ENCODE measurements at regions of chr5 and their contacts with region 1.

Region 1: DNA sequence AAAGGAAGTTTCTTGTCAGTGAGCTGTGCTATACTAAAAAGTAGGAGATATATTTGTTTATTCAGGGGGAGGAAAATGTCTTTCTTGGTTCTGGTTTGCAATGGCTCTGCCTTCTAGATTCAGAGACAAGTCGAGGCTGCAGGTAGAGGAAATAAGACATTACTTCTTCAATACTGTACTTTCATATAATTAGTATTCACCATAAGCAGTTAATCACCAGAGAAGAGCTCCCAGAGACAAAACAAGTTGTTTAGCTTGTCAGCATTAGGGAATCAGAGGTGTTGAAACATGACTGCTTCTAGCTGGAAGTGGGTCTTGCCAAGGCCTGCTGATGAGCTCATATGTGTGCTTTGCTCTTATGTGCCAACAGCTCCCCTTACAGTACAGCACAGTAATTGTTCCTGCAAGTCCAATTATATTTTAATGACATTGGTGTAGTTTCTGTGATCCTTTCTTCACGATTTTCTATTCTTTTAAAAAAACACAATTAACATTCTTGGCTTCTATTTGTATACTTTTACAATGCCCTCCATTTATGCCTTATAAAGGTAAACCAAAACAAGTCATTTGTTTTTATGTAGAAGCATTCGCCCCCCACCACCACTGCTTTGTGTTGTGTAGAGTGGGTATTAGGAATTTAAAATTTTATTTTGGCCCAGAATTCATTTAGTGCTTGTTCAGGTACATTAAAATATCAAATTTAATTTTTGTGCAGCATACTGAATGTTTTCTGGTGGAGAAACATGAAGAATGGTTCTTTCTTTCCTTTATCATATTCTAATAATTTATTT is 112.2 kb downstream of the RPS23 start:
- DNase-seq: peak; percentile 71 to 93
- ATAC-seq: peak; percentile 89 to 91
- H3K4me3 ChIP-seq: no peak overlapping the region
- H3K27ac ChIP-seq: peak overlapping the region; percentile 88
- H3K4me1 ChIP-seq: peaks cover 36% of the 10 kb centered on the region
- CTCF ChIP-seq: peak; percentile 96
- EP300 ChIP-seq: no peak
- POLR2A ChIP-seq: no peak
- RAD21 ChIP-seq: peak; percentile 97 to 98

Region 2: DNA sequence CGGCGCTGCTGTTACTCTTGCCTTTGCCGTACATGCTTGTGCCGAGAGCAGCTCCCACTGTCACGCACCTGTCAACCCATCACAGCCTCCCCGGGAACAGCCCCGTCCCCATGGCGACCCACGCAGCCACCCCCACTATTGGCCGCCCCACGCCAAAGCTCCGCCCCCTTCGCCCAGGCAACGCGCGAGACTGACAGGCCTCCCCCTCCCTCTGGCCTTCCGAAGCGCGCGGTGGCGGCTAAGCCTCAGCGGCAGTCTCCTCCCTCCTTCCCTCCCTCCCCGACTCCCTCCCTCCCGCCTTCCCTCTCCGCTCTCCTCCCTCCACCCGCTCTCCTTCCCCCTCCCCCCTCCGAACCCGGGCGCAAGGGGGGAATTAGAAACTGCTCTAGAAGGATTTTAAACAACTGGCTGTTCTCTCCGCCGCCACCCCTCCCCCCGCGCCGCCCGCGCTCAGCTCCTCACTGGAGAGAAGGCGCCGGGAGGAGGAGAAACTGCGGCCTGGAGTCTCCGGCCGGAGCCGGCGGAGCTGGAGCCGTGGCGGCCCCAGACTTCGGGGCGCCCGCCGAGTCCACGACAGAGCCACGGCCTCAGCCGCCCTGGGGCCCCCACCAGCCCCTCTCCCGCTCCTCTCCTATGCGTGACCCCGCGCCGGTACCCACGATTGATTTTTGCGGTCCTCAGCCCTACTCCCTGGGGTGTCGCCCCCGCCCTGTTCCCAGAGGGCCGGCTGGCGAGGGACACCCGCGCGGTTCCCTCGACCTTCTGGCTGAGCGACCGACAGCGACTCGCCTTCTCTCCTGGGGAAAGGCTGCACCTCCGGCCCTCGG is 414.7 kb before region 1 on chr5 and contains the start of gene SSBP2:
- CTCF ChIA-PET with region 1: interaction called, 12 read pairs
- POLR2A ChIA-PET with region 1: interaction called, 25 read pairs
- DNase-seq: peak; percentile 73 to 98
- ATAC-seq: peak; percentile 81 to 90
- H3K4me3 ChIP-seq: peak within 1 kb of the TSS; percentile 92
- H3K27ac ChIP-seq: peak within 1 kb of the TSS; percentile 95 to 98
- H3K4me1 ChIP-seq: peaks cover 27% of the 10 kb centered on the region
- CTCF ChIP-seq: no peak
- EP300 ChIP-seq: peak; percentile 49 to 71; a peak in 2 of 5 replicates
- POLR2A ChIP-seq: peak; percentile 51
- RAD21 ChIP-seq: peak; percentile 60 to 92
- polyA plus RNA-seq, gene SSBP2: 14.2 and 17.0 TPM in 2 replicates

Region 3: GRCh38 chr5:81971712-81972495 is 194.0 kb before region 1 on chr5 and contains the start of gene ATG10:
- CTCF ChIA-PET with region 1: interaction called, 3 read pairs
- POLR2A ChIA-PET with region 1: interaction called, 13 read pairs
- DNase-seq: peak; percentile 91 to 95
- ATAC-seq: peak; percentile 96 to 98
- H3K4me3 ChIP-seq: peak within 1 kb of the TSS; percentile 63
- H3K27ac ChIP-seq: peak within 1 kb of the TSS; percentile 90 to 94
- H3K4me1 ChIP-seq: peaks cover 13% of the 10 kb centered on the region
- CTCF ChIP-seq: no peak
- EP300 ChIP-seq: no peak
- POLR2A ChIP-seq: peak; percentile 72
- RAD21 ChIP-seq: peak in 1 of 2 experiments; percentile 26; a peak in 2 of 5 replicates
- polyA plus RNA-seq, gene ATG10: 12.7 and 14.0 TPM in 2 replicates

Region 4: DNA sequence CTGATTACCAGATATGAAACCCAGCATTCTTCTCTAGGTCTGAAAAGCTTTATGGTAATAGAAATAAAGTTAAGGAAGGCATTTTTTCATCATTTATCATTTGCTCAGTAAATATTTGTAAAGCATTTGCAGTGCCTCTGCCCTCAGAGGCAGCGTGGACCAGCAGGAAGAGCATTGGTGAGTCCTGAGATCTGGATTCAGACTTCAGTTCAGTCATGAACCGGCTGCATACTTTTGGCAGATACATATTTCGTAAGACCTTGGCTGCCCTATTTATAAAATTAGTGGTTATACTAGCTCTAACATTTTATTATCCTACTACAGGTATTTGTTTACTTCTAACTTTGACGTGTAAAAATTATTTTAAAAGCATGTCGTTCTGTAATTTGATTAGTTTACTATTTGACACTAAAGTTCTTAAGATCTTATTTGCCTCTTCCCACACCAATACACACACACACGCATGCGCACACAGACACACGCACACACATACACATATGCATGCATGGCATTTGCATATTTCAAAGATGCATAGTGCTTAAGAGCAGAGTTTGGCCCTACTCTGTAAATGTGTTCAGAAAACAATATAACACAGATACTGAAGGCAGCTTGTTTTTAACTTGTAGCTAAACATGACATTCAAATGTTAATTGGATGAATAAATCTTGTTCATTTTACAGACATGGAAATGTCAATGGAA is 10.3 kb after region 1 on chr5:
- CTCF ChIA-PET with region 1: interaction called, 10 read pairs
- POLR2A ChIA-PET with region 1: no interaction called
- DNase-seq: no peak
- ATAC-seq: no peak
- H3K4me3 ChIP-seq: no peak overlapping the region
- H3K27ac ChIP-seq: no peak overlapping the region
- H3K4me1 ChIP-seq: peaks cover 8% of the 10 kb centered on the region; the same call in 2 of the 3 replicates
- CTCF ChIP-seq: no peak
- EP300 ChIP-seq: no peak
- POLR2A ChIP-seq: no peak
- RAD21 ChIP-seq: no peak

Measured in A549 (cell line).